IMR-90 (cell line): ENCODE measurements at regions of chr1 and their contacts with region 1.

Region 1: DNA sequence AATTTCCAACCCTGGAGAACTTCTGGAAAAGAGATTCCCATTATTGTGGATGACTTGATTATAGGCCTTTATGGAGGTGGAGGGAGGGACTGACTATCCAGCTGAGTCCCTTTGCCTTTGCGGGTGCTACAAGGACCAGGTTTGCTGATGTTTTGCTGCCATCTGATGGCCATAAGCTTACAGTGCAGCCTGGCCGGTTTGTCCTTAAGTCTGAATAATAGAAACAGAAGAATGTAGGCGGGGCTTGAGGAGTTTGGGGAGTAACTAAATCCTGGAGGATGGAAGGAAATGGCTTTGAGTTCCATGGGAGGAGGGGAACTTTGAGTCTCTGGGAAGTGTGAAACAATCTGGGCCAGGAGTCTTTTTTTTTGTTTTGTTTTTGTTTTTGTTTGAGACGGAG is 55.7 kb upstream of the CD1D start:
- DNase-seq: peak; percentile 92
- ATAC-seq: peak; percentile 99
- H3K4me3 ChIP-seq: no peak overlapping the region
- H3K27ac ChIP-seq: no peak overlapping the region
- H3K4me1 ChIP-seq: no peaks in the 10 kb centered on the region
- H3K27me3 ChIP-seq: peaks cover 25% of the 10 kb centered on the region
- CTCF ChIP-seq: peak; percentile 99
- POLR2A ChIP-seq: 0 out of 2 replicates have a peak, but pooled peaks have one; percentile 39
- RAD21 ChIP-seq: peak; percentile 100

Region 2: GRCh38 chr1:157193702-157194391 is 931.2 kb before region 1 on chr1:
- CTCF ChIA-PET with region 1: no interaction called
- POLR2A ChIA-PET with region 1: no interaction called
- dilution Hi-C with region 1: no loop called
- in situ Hi-C with region 1: no loop called
- intact Hi-C with region 1: loop called (anchors 10 kb)
- DNase-seq: peak; percentile 42
- ATAC-seq: peak; percentile 82
- H3K4me3 ChIP-seq: no peak overlapping the region
- H3K27ac ChIP-seq: no peak overlapping the region
- H3K4me1 ChIP-seq: no peaks in the 10 kb centered on the region
- H3K27me3 ChIP-seq: peaks cover 50% of the 10 kb centered on the region
- CTCF ChIP-seq: peak; percentile 72
- POLR2A ChIP-seq: no peak
- RAD21 ChIP-seq: peak; percentile 50

Region 3: DNA sequence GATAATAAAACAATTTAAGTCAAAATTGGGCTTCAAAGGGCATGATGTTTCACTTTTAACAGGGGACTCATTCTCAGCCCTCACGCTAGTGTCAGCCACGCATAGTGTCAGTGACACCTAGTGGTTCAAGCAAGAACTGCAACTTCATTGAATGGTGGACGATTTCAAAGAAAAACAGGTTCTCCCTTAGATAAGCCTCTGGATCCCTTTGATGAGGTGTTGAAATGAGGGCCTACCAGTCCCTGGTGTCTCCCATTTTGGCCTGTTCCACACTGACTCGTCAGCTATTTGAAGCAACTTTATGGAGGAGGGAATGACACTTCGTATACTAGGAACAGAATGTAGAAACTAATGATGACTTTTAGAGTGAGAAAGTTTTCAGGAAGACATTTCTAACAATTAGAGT is 628.9 kb before region 1 on chr1:
- CTCF ChIA-PET with region 1: no interaction called
- POLR2A ChIA-PET with region 1: no interaction called
- dilution Hi-C with region 1: no loop called
- in situ Hi-C with region 1: no loop called
- intact Hi-C with region 1: loop called (anchors 2 kb)
- DNase-seq: peak; percentile 23
- ATAC-seq: peak; percentile 97
- H3K4me3 ChIP-seq: no peak overlapping the region
- H3K27ac ChIP-seq: no peak overlapping the region
- H3K4me1 ChIP-seq: no peaks in the 10 kb centered on the region
- H3K27me3 ChIP-seq: no peaks in the 10 kb centered on the region
- CTCF ChIP-seq: peak; percentile 67
- POLR2A ChIP-seq: no peak
- RAD21 ChIP-seq: peak; percentile 48

Region 4: DNA sequence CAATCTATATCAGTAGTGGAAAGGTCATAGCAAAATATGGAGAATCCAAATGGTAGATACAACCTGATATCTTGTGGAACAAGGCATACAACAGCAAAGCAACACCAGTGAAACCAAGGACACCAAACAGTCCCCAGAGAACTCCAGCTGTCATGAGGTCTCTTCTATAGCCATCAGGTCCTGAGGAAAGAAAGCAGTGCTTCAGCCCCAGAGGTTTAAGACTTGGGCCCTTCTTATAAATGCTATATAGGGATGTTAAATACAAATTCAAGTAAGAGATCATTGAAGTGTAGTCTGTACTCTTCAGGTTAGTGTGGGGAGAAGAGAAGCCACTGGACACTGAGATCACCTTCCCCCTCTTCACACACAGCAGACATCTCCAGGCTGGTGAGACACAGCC is 358.2 kb before region 1 on chr1:
- CTCF ChIA-PET with region 1: no interaction called
- POLR2A ChIA-PET with region 1: no interaction called
- dilution Hi-C with region 1: no loop called
- in situ Hi-C with region 1: no loop called
- intact Hi-C with region 1: loop called (anchors 10 kb)
- DNase-seq: no peak
- ATAC-seq: no peak
- H3K4me3 ChIP-seq: no peak overlapping the region
- H3K27ac ChIP-seq: no peak overlapping the region
- H3K4me1 ChIP-seq: no peaks in the 10 kb centered on the region
- H3K27me3 ChIP-seq: no peaks in the 10 kb centered on the region
- CTCF ChIP-seq: no peak
- POLR2A ChIP-seq: no peak
- RAD21 ChIP-seq: no peak

Region 5: DNA sequence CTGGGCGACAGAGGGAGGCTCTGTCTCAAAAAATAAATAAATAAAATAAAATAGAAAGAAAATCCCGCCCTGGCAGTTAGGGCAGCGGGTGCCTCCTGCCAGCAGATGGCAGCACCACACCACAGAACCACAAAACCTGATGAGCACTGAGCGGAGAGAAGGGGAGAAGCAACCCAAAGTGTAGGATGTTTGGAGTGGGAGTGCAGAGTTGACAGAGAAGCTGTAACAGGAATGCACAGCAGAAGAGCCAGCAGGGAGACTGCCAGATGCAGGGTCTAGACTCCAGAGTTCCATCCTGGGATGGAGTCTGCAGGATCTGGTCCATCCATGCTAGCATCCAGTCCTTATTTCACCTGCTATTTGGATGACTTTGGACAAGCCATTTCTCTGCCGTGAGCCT is 161.3 kb before region 1 on chr1:
- CTCF ChIA-PET with region 1: interaction called, 47 read pairs
- POLR2A ChIA-PET with region 1: no interaction called
- dilution Hi-C with region 1: loop called (anchors 25 kb)
- in situ Hi-C with region 1: loop called (anchors 5 kb)
- intact Hi-C with region 1: loop called (anchors 1 kb)
- DNase-seq: peak; percentile 66
- ATAC-seq: peak; percentile 78
- H3K4me3 ChIP-seq: no peak overlapping the region
- H3K27ac ChIP-seq: no peak overlapping the region
- H3K4me1 ChIP-seq: peaks cover 13% of the 10 kb centered on the region
- H3K27me3 ChIP-seq: peaks cover 13% of the 10 kb centered on the region
- CTCF ChIP-seq: peak; percentile 94
- POLR2A ChIP-seq: 0 out of 2 replicates have a peak, but pooled peaks have one; percentile 37
- RAD21 ChIP-seq: peak; percentile 95

Region 6: GRCh38 chr1:157992031-157992832 is 132.8 kb before region 1 on chr1:
- CTCF ChIA-PET with region 1: interaction called, 29 read pairs
- POLR2A ChIA-PET with region 1: no interaction called
- dilution Hi-C with region 1: no loop called
- in situ Hi-C with region 1: no loop called
- intact Hi-C with region 1: loop called (anchors 1 kb)
- DNase-seq: peak; percentile 63
- ATAC-seq: peak; percentile 33
- H3K4me3 ChIP-seq: no peak overlapping the region
- H3K27ac ChIP-seq: peak overlapping the region; percentile 0; the same call in 1 of the 2 replicates
- H3K4me1 ChIP-seq: peaks cover 10% of the 10 kb centered on the region
- H3K27me3 ChIP-seq: peaks cover 21% of the 10 kb centered on the region
- CTCF ChIP-seq: peak; percentile 99
- POLR2A ChIP-seq: 0 out of 2 replicates have a peak, but pooled peaks have one; percentile 23
- RAD21 ChIP-seq: peak; percentile 98

Region 7: DNA sequence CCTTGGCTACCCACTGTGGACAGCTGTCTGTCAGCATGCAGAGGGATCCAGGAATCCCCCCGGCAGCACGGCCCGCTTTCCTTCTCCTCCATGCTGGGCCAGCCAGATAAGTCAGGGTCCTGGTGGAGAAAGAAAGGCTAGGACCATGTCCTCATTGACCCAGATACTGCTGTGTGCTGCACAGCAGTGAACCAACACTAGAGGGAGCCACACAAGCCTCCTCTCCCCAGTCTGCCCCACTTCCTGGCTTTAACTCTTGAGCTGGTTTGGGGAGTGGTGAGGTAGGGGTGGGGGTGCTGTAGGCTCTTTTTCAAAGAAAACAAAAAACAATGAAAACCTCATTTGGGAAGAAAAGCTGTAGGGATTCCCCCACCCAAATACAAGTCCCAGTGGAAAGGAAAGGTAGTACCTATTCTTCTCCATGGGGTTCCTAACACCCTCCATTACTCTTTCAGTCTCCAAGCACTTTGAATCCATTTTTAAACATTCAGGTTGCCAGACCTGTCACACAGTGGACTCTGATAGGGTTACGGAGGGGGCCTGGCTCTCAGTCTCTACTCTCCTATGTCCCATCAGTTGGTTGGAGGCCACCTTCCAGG is 29.2 kb before region 1 on chr1:
- CTCF ChIA-PET with region 1: no interaction called
- POLR2A ChIA-PET with region 1: no interaction called
- dilution Hi-C with region 1: no loop called
- in situ Hi-C with region 1: no loop called
- intact Hi-C with region 1: no loop called
- DNase-seq: peak; percentile 17
- ATAC-seq: peak; percentile 56; the same call in 1 of the 2 replicates
- H3K4me3 ChIP-seq: no peak overlapping the region
- H3K27ac ChIP-seq: no peak overlapping the region
- H3K4me1 ChIP-seq: no peaks in the 10 kb centered on the region
- H3K27me3 ChIP-seq: no peaks in the 10 kb centered on the region
- CTCF ChIP-seq: peak; percentile 61
- POLR2A ChIP-seq: no peak
- RAD21 ChIP-seq: peak; percentile 48

Region 8: GRCh38 chr1:158998781-158999161 is 873.8 kb after region 1 on chr1:
- CTCF ChIA-PET with region 1: interaction called, 4 read pairs
- POLR2A ChIA-PET with region 1: no interaction called
- dilution Hi-C with region 1: no loop called
- in situ Hi-C with region 1: no loop called
- intact Hi-C with region 1: loop called (anchors 2 kb)
- DNase-seq: peak; percentile 61
- ATAC-seq: peak; percentile 59
- H3K4me3 ChIP-seq: peak overlapping the region; percentile 61
- H3K27ac ChIP-seq: peak overlapping the region; percentile 36; the same call in 1 of the 2 replicates
- H3K4me1 ChIP-seq: no peaks in the 10 kb centered on the region
- H3K27me3 ChIP-seq: no peaks in the 10 kb centered on the region
- CTCF ChIP-seq: peak; percentile 90
- POLR2A ChIP-seq: no peak
- RAD21 ChIP-seq: peak; percentile 78